ENCODE measurements at regions of chr2 and their contacts with region 1.

Region 1: GRCh38 chr2:152407204-152407721 is 72.3 kb downstream of the FMNL2 start:
- DNase-seq: peak; percentile 27
- H3K4me3 Mint-ChIP-seq: peak overlapping the region; percentile 73
- H3K27ac Mint-ChIP-seq: peak overlapping the region; percentile 67
- H3K4me1 Mint-ChIP-seq: peaks cover 57% of the 10 kb centered on the region
- H3K27me3 Mint-ChIP-seq: no peaks in the 10 kb centered on the region

Region 2: DNA sequence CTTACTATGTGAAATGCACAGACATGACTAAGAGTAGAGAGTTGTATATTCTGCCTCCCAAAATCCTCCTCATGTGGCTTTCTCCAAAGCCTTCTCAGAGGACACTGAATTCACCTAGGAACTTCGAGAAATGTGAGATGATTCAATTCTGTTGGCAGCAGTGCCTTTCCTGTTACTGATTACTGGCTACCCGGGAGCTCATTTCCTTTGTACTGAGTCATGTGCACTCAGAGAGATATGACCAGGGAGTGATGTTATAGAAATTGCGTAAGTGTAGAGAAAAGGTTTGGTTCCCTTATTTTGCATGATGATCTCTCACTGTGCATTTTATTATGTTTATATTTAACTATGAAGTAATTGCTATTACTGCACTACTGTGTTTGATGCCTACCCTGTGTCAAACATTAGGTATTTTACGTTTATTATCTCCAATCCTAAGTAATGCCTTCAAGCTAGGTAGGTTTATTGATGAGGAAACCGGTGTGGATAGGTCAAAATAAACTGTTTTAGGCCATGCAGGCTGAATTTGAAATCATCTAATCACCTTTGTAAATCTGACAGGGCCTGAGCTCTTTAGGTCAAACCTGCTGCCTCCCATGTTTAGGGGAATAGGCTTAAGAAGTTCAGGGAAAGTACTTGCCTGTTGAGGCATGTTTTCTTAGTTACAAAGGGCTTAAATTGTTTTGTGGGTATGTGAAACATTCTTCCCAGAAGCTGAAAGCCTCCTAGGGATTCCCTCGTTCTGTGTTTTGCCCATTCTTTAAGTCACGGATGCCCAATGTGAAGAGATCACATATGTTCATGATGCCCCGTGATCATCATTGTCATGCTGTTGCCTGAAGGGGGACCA is 14.5 kb after region 1 on chr2:
- intact Hi-C with region 1: loop called (anchors 2 kb)
- DNase-seq: no peak
- H3K4me3 Mint-ChIP-seq: no peak overlapping the region
- H3K27ac Mint-ChIP-seq: no peak overlapping the region
- H3K4me1 Mint-ChIP-seq: peaks cover 33% of the 10 kb centered on the region
- H3K27me3 Mint-ChIP-seq: no peaks in the 10 kb centered on the region

Region 3: GRCh38 chr2:152506843-152507242 is 99.6 kb after region 1 on chr2:
- intact Hi-C with region 1: loop called (anchors 1 kb)
- DNase-seq: peak; percentile 6
- H3K4me3 Mint-ChIP-seq: no peak overlapping the region
- H3K27ac Mint-ChIP-seq: peak overlapping the region; percentile 63
- H3K4me1 Mint-ChIP-seq: peaks cover 20% of the 10 kb centered on the region
- H3K27me3 Mint-ChIP-seq: no peaks in the 10 kb centered on the region